Cardiac septum (tissue), 1 donor: ENCODE measurements at regions of chr14 and their contacts with region 1.

Region 1: DNA sequence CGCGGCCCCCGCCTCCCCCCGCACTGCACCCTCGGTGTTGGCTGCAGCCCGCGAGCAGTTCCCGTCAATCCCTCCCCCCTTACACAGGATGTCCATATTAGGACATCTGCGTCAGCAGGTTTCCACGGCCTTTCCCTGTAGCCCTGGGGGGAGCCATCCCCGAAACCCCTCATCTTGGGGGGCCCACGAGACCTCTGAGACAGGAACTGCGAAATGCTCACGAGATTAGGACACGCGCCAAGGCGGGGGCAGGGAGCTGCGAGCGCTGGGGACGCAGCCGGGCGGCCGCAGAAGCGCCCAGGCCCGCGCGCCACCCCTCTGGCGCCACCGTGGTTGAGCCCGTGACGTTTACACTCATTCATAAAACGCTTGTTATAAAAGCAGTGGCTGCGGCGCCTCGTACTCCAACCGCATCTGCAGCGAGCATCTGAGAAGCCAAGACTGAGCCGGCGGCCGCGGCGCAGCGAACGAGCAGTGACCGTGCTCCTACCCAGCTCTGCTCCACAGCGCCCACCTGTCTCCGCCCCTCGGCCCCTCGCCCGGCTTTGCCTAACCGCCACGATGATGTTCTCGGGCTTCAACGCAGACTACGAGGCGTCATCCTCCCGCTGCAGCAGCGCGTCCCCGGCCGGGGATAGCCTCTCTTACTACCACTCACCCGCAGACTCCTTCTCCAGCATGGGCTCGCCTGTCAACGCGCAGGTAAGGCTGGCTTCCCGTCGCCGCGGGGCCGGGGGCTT is at the start of gene FOS:
- DNase-seq: peak; percentile 98
- total RNA-seq, gene FOS: 25.8 TPM

Region 2: GRCh38 chr14:75147423-75148071 is 131.0 kb before region 1 on chr14:
- intact Hi-C with region 1: loop called (anchors 5 kb)
- DNase-seq: peak; percentile 81

Region 3: GRCh38 chr14:75234173-75235115 is 44.1 kb before region 1 on chr14:
- intact Hi-C with region 1: loop called (anchors 1 kb)
- DNase-seq: no peak

Region 4: DNA sequence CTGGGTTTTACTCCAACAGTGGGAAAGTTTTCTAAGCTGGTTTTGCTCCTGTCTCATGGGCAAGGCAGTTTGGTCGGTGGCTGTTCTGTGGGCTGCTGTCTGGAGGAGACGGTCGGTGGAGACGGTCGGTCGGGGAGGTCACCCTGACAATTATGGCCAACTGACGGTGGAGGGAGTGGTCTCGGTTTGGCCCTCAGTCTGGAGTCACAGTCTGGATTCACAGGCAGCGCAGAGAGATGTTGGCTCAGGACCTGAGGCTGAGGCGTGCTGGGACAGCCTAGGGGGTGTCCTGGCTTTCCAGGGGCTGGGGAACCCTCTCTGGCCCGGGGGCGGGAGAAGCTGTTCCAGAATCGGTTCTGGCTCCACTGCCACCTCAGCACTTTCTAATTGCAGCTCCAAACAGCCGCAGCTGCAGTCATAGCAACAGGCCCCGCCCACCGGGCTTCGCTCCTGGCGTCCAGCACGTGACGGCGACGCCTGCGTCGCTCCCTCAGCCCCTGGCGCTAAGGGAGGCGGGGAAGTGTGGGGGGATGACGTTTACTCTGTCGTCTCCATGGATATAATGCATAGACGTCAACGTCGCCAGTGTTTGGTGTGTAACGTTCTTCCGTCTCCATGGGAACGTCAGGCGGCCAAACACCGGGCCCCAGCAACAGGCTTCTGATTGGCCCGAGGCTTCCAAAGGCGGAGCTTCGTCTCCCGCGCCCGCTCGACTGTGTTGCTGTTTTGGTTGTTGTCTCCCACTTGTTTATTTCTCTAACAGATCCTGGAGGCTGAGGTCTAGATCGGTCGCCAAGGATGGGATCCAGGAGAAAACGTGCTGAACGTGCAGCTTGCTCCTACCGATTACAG is 19.8 kb before region 1 on chr14:
- intact Hi-C with region 1: loop called (anchors 2 kb)
- DNase-seq: peak; percentile 100